GM12878 (cell line): ENCODE measurements at regions of chr18 and their contacts with region 1.

Region 1: DNA sequence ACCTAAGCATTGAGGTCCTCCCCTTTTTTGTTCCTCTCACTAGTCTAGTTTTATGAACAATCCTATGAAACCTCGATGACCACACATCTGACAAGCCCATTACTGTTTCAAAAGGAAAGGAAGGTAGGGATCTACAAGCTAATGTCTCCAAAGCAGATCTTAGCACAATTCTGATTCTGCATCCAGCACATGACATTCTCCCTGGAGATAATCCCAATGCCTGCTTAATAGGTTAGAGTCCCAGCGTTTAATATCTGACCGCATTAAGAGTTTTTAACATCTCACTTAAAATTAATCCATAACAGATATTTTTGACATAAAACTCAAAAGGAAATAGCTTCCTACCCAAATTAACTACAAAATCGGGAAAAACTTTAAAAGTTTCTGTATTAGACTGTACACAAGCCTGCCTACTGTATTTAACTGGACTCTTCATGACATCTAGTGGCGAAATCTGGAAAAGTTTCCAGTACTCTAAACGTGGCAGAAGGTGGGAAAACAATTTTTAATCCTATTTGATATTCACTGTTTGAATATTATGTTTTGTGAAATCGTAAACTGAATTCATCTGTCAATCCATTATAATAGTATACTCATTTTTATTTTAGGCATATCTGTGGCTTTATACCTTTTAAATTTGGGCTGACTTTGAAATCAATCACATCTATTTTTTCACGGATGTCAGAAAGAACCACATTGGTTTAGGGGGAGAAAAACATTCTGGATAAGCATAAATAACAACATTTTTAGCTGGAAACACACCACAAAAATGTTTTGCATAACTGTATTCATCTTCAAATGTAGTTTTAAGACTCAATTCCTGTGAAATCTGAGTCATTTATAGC is 62.4 kb downstream of the TXNL1 start:
- DNase-seq: no peak
- ATAC-seq: peak; percentile 90
- H3K4me3 ChIP-seq: no peak overlapping the region
- H3K27ac ChIP-seq: no peak overlapping the region
- H3K4me1 ChIP-seq: no peaks in the 10 kb centered on the region
- H3K27me3 ChIP-seq: no peaks in the 10 kb centered on the region; a peak in 1 of 4 replicates
- CTCF ChIP-seq: peak; percentile 44 to 57 (median 49); a peak in 5 of 6 replicates
- EP300 ChIP-seq: no peak
- POLR2A ChIP-seq: no peak
- RAD21 ChIP-seq: peak; percentile 89

Region 2: GRCh38 chr18:55337908-55338521 is 1238.0 kb before region 1 on chr18:
- CTCF ChIA-PET with region 1: interaction called, 7 read pairs
- POLR2A ChIA-PET with region 1: no interaction called
- RAD21 ChIA-PET with region 1: interaction called, 3 read pairs
- SMC1A ChIA-PET with region 1: no interaction called
- in situ Hi-C with region 1: loop called (anchors 10 kb)
- intact Hi-C with region 1: loop called (anchors 5 kb)
- DNase-seq: no peak
- ATAC-seq: peak; percentile 42
- H3K4me3 ChIP-seq: no peak overlapping the region
- H3K27ac ChIP-seq: no peak overlapping the region
- H3K4me1 ChIP-seq: no peaks in the 10 kb centered on the region
- H3K27me3 ChIP-seq: peaks cover 1 to 3% of the 10 kb centered on the region in 2 experiments; a peak in 2 of 4 replicates
- CTCF ChIP-seq: no peak
- EP300 ChIP-seq: no peak
- POLR2A ChIP-seq: no peak
- RAD21 ChIP-seq: no peak

Region 3: DNA sequence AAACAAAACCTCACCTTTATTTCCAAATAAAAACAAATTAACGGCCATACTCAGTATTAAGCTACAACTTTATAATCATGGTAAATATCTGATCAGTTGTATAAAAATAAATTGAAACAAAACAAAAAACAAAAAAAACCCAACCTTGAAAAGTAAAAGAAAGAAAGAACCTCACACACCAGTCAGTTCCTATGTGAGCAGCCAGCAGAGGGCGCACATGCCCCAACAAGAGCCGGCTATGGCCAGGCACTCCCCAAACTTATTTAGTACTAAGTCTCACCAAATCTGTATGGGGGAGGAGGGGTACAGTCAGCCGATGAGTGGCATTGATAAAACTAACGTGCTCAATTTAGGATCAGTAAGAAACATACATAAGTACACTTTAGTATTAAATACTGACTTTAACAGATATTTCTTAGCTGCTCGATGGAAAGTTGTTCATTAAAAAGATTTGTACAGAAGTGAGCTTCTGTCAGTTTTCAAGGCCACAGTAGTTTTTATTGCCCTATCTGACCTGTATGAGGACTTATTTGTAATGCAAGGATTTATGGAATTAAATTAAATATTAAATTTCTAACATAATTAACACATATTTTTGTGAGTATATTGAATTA is 1160.7 kb before region 1 on chr18:
- CTCF ChIA-PET with region 1: interaction called, 40 read pairs
- POLR2A ChIA-PET with region 1: no interaction called
- RAD21 ChIA-PET with region 1: interaction called, 6 read pairs
- SMC1A ChIA-PET with region 1: interaction called, 28 read pairs
- in situ Hi-C with region 1: loop called (anchors 5 kb)
- intact Hi-C with region 1: loop called (anchors 1 kb)
- DNase-seq: peak; percentile 9
- ATAC-seq: peak; percentile 99
- H3K4me3 ChIP-seq: no peak overlapping the region
- H3K27ac ChIP-seq: no peak overlapping the region
- H3K4me1 ChIP-seq: peaks cover 1% of the 10 kb centered on the region; the same call in 1 of the 2 replicates
- H3K27me3 ChIP-seq: no peaks in the 10 kb centered on the region
- CTCF ChIP-seq: peak; percentile 83 to 87 (median 85)
- EP300 ChIP-seq: no peak
- POLR2A ChIP-seq: no peak
- RAD21 ChIP-seq: peak; percentile 94

Region 4: DNA sequence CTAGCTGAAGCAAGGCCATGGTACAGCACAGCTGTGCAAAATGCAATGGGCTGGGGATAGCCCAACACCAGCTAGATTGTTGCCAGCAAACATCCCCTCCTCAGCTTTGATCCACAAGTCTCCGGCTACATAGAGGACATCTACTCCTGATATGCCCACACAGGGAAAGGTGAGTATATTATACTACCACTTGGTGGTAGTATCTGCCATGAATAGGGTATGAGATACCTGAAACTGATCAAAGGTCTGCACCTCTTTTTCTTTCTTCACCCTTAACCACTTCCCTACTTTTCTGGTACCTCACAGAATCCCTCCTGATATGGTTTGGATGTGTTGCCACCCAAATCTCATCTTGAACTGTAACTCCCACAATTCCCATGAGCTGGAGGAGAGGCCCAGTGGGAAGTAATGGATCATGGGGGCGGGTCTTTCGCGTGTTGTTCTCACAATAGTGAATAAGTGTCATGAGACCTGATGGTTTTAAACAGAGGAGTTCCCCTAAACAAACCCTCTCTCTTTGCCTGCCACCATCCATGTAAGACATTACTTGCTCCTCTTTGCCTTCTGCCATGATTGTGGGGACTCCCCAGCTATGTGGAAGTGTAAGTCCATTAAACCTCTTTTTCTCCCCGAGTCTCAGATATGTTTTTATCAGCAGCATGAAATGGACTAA is 217.3 kb before region 1 on chr18:
- CTCF ChIA-PET with region 1: interaction called, 17 read pairs
- POLR2A ChIA-PET with region 1: no interaction called
- RAD21 ChIA-PET with region 1: interaction called, 4 read pairs
- SMC1A ChIA-PET with region 1: interaction called, 17 read pairs
- in situ Hi-C with region 1: no loop called
- intact Hi-C with region 1: no loop called
- DNase-seq: no peak
- ATAC-seq: peak; percentile 48; the same call in 2 of the 3 replicates
- H3K4me3 ChIP-seq: no peak overlapping the region
- H3K27ac ChIP-seq: no peak overlapping the region
- H3K4me1 ChIP-seq: no peaks in the 10 kb centered on the region
- H3K27me3 ChIP-seq: no peaks in the 10 kb centered on the region
- CTCF ChIP-seq: no peak
- EP300 ChIP-seq: no peak
- POLR2A ChIP-seq: no peak
- RAD21 ChIP-seq: no peak

Region 5: DNA sequence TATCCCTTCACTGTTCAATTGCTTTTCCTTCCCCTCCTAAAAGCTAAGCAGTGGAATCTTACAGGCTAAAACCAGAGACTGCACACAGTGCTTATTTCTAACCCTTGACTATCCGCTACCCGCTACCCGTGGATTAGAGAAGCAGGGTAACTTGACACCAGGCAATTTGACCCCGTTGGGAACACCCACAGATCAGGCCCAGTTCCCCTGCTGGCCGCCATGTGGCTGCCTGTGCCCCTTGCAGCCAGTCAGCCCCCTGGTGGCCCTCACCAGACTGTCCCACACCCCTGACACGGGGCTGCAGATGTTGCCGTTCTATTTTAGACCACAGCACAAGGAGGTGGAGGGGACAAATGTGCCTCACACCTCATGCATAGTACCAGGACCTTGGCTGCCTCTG is 12.5 kb before region 1 on chr18:
- CTCF ChIA-PET with region 1: interaction called, 60 read pairs
- POLR2A ChIA-PET with region 1: no interaction called
- RAD21 ChIA-PET with region 1: interaction called, 6 read pairs
- SMC1A ChIA-PET with region 1: interaction called, 25 read pairs
- in situ Hi-C with region 1: no loop called
- intact Hi-C with region 1: no loop called
- DNase-seq: no peak
- ATAC-seq: peak; percentile 92
- H3K4me3 ChIP-seq: no peak overlapping the region
- H3K27ac ChIP-seq: no peak overlapping the region
- H3K4me1 ChIP-seq: no peaks in the 10 kb centered on the region
- H3K27me3 ChIP-seq: no peaks in the 10 kb centered on the region; a peak in 1 of 4 replicates
- CTCF ChIP-seq: peak; percentile 28 to 46 (median 29); a peak in 5 of 6 replicates
- EP300 ChIP-seq: no peak
- POLR2A ChIP-seq: no peak
- RAD21 ChIP-seq: peak; percentile 24; the same call in 1 of the 2 replicates

Region 6: GRCh38 chr18:57797209-57797651 is 1221.2 kb after region 1 on chr18:
- CTCF ChIA-PET with region 1: no interaction called
- POLR2A ChIA-PET with region 1: no interaction called
- RAD21 ChIA-PET with region 1: no interaction called
- SMC1A ChIA-PET with region 1: no interaction called
- in situ Hi-C with region 1: no loop called
- intact Hi-C with region 1: no loop called
- DNase-seq: no peak
- ATAC-seq: no peak
- H3K4me3 ChIP-seq: no peak overlapping the region
- H3K27ac ChIP-seq: no peak overlapping the region
- H3K4me1 ChIP-seq: no peaks in the 10 kb centered on the region
- H3K27me3 ChIP-seq: peaks cover 6 to 11% of the 10 kb centered on the region in 2 experiments
- CTCF ChIP-seq: no peak
- EP300 ChIP-seq: no peak
- POLR2A ChIP-seq: no peak
- RAD21 ChIP-seq: no peak